Activated CD8-positive, alpha-beta T cell treated with anti-CD3 and anti-CD28 coated beads, Interleukin-2, amount 10 ng/mL, durations not matched to agents 7 days and 5 days (primary cell): ENCODE measurements at regions of chr10 and their contacts with region 1.

Region 1: DNA sequence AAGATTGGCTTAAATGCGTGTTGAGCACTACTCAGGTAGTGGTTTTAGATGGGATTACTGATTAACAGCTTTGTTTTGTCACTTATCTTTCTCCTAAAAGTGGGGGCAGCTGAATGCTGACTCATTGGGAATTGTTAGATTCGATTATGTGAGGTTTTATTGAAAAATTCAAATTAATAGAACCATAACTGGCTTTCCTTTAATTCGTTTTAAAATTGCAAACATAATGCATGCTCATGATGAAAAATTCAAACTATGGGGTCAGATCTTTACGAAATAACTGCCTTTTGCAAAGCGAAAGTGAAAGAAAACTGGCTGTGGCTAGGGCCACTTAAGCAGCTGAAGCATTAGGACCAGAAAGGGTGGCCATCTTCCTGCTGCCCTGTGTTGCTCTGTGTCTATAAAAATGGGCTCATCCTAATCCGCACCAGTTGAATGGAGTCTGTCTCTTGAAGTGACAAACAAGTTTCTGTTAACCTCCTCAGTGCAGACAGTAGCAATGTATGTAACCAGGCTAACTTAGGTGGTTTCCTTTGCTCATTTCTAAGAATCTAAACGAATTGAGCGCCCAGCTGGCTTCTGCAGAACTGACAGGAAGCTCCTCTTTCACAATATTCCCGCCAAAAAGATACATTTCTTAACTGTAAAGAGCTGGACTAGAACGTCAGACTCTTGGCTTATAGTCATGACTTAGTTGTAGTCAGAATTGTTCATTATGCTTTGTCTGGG is 27.8 kb downstream of the DENND10 start:
- DNase-seq: peak; percentile 79
- ATAC-seq: peak; percentile 94
- H3K4me3 Mint-ChIP-seq: peak overlapping the region; percentile 72
- H3K27ac Mint-ChIP-seq: peak overlapping the region; percentile 93
- H3K4me1 Mint-ChIP-seq: peaks cover 59% of the 10 kb centered on the region
- H3K27me3 Mint-ChIP-seq: no peaks in the 10 kb centered on the region

Region 2: DNA sequence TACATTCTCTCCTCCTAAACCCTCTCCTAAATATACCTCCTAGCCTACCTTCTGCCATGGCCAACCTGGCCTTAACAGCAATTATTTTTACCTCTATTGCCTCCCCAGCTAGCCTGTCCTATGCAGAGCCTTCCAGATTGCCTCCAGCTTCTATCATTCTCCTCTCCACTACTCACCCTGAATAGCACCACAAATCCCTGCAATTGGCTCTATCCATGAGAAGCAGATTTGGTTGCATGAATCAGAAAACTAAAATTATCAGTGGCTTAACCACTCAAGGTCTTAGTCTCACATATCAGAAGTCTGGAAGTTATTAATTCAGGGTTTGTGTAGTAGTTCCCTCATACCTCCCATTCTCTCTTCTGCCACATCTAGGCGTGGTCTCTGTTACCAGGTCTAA is 256.6 kb before region 1 on chr10:
- CTCF ChIA-PET with region 1: no interaction called
- POLR2A ChIA-PET with region 1: no interaction called
- DNase-seq: no peak
- ATAC-seq: no peak
- H3K4me3 Mint-ChIP-seq: no peak overlapping the region
- H3K27ac Mint-ChIP-seq: no peak overlapping the region
- H3K4me1 Mint-ChIP-seq: no peaks in the 10 kb centered on the region
- H3K27me3 Mint-ChIP-seq: peaks cover 20% of the 10 kb centered on the region

Region 3: GRCh38 chr10:119090968-119091367 is 40.7 kb before region 1 on chr10:
- CTCF ChIA-PET with region 1: no interaction called
- POLR2A ChIA-PET with region 1: interaction called, 16 read pairs
- DNase-seq: peak; percentile 71
- ATAC-seq: peak; percentile 87
- H3K4me3 Mint-ChIP-seq: peak overlapping the region; percentile 44
- H3K27ac Mint-ChIP-seq: peak overlapping the region; percentile 90
- H3K4me1 Mint-ChIP-seq: peaks cover 49% of the 10 kb centered on the region
- H3K27me3 Mint-ChIP-seq: peaks cover 3% of the 10 kb centered on the region

Region 4: GRCh38 chr10:119103903-119104652 is 27.6 kb before region 1 on chr10 and contains the start of gene DENND10:
- CTCF ChIA-PET with region 1: interaction called, 4 read pairs
- POLR2A ChIA-PET with region 1: interaction called, 37 read pairs
- DNase-seq: peak; percentile 81
- ATAC-seq: peak; percentile 85
- H3K4me3 Mint-ChIP-seq: peak within 1 kb of the TSS; percentile 78
- H3K27ac Mint-ChIP-seq: peak within 1 kb of the TSS; percentile 60
- H3K4me1 Mint-ChIP-seq: peaks cover 31% of the 10 kb centered on the region
- H3K27me3 Mint-ChIP-seq: peaks cover 2% of the 10 kb centered on the region
- total RNA-seq, gene DENND10: 39.9 to 41.3 TPM

Region 5: DNA sequence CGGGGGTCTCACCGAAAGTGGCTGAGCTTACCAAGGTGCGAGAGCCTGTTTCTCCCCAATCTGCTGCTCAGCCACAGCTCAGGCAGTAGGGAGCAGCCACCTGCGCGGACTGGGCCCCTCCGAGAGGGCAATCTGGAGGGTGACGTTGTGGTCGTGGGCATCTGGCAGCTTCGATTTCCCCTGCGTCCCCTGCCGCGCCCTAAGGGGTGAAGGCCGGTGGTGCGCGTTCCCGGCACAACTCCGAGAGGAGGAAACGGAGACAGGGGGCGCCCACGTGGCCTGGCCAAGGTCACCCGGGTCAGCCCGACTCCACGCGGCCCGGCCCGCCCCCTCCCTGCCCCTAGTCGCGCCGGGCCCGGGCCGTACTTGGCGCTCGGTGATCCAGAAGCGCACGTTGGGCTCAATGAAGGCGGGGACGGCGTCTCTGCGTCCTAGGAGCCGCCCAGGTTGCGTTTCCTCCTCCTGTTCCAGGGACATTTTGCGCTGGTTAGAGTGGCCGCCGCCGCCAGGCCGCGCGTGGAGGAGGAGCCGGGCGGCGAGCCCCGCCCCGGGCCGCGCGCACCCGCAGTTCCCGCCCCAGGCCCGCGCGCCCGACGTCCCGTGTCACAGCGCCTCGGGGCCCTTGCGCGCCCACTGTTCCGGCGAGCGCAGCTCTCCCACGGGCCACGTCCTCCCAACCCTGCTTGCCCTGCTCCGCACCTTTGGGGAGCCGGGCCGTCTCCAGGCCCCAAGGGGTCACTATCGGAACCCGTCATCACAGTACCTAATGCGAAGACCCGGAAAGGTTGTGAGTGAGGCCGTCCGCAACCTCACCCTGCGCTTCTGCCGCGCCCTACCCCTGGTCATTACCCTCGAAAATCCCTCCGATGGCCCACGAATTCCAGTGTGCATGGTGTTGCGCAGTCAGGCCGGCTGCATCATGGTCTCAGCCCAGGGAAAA is 33.8 kb after region 1 on chr10 and contains the start of gene SFXN4:
- CTCF ChIA-PET with region 1: interaction called, 7 read pairs
- POLR2A ChIA-PET with region 1: interaction called, 10 read pairs
- DNase-seq: peak; percentile 83
- ATAC-seq: peak; percentile 92
- H3K4me3 Mint-ChIP-seq: peak within 1 kb of the TSS; percentile 88
- H3K27ac Mint-ChIP-seq: peak within 1 kb of the TSS; percentile 97
- H3K4me1 Mint-ChIP-seq: peaks cover 47% of the 10 kb centered on the region
- H3K27me3 Mint-ChIP-seq: no peaks in the 10 kb centered on the region
- total RNA-seq, gene SFXN4: 35.0 to 36.7 TPM